ENCODE measurements at regions of chr17 and their contacts with region 1.

Region 1: GRCh38 chr17:29722411-29723198 is 99.9 kb upstream of the CORO6 start:
- DNase-seq: peak; percentile 53
- H3K4me3 ChIP-seq: no peak overlapping the region
- H3K27ac ChIP-seq: no peak overlapping the region
- H3K27me3 ChIP-seq: no peaks in the 10 kb centered on the region
- CTCF ChIP-seq: no peak

Region 2: DNA sequence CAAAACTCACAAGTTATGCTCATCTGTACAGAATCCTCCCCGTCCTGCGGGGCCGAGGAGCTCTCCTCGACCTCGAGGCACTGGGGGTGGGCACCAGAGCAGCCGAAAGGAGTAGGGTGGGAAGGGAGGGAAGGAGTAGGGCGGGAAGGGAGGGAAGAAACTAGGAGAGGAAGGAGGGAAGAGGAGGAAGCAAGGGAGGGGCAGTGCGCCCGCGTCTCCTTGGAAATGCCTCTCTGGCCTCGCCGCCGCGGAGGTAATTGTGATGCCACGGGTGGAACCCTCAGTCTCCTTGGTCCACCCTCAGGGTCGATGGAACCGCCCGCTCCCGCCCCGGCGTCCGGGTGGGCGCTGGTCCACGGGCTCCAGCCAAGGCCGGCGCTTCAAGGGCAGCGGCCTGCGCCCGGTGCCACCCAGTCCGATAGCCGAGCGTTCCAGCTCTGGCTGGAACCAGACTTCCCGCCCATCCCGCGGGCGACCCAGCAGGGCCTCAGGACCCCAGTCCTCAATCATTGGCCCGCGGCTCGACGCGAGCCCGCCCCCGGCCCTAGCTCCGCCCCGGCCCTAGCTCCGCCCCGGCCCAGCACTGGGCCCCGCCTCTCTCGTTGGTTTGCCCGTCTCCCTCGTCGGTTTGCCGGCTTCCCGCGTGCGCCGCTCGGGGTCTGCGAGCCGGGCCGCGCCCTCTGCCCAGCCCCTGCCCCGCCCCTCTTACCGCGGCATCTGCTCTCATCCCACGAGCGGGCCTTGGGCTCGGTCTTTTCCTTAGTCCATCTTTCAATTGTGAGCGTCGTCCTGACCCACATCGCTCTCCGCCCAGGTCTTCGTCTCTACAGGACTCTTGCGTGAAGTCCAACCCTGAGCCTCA is 1011.5 kb before region 1 on chr17:
- CTCF ChIA-PET with region 1: no interaction called
- POLR2A ChIA-PET with region 1: no interaction called
- DNase-seq: peak; percentile 68
- H3K4me3 ChIP-seq: peak overlapping the region; percentile 64
- H3K27ac ChIP-seq: peak overlapping the region; percentile 78
- H3K27me3 ChIP-seq: no peaks in the 10 kb centered on the region
- CTCF ChIP-seq: no peak

Region 3: GRCh38 chr17:29687596-29687995 is 35.0 kb before region 1 on chr17:
- CTCF ChIA-PET with region 1: interaction called, 4 read pairs
- POLR2A ChIA-PET with region 1: interaction called, 10 read pairs
- DNase-seq: no peak
- H3K4me3 ChIP-seq: no peak overlapping the region
- H3K27ac ChIP-seq: no peak overlapping the region
- H3K27me3 ChIP-seq: no peaks in the 10 kb centered on the region
- CTCF ChIP-seq: no peak

Region 4: DNA sequence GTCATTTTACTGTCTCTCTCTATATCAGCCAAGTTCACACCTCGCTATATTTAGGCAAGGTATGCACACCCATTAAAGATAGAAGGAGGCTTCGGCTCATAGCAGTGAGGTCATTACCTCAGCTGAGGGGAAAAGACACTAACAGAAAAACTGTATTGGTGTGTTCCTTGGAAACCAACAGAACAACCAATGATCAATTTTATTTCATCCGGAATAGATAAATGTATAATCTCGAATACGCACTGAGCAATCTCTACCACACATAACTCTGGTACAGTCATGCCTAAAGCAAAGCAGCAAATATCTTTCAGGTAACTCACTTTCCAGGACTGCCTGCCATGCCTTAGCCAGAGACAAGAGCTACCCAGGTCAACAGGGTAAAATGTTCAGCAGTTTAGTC is 10.0 kb after region 1 on chr17:
- CTCF ChIA-PET with region 1: no interaction called
- POLR2A ChIA-PET with region 1: interaction called, 11 read pairs
- DNase-seq: no peak
- H3K4me3 ChIP-seq: no peak overlapping the region
- H3K27ac ChIP-seq: peak overlapping the region; percentile 68
- H3K27me3 ChIP-seq: no peaks in the 10 kb centered on the region
- CTCF ChIP-seq: no peak

Region 5: GRCh38 chr17:29802246-29802645 is 79.6 kb after region 1 on chr17:
- CTCF ChIA-PET with region 1: interaction called, 20 read pairs
- POLR2A ChIA-PET with region 1: no interaction called
- DNase-seq: no peak
- H3K4me3 ChIP-seq: no peak overlapping the region
- H3K27ac ChIP-seq: no peak overlapping the region
- H3K27me3 ChIP-seq: no peaks in the 10 kb centered on the region
- CTCF ChIP-seq: no peak